Breast epithelium (tissue), 4 donors: ENCODE measurements at regions of chr3 and their contacts with region 1.

Region 1: GRCh38 chr3:89533275-89533674 is 425.9 kb downstream of the EPHA3 start:
- DNase-seq: no peak
- H3K4me3 ChIP-seq: no peak overlapping the region
- H3K27ac ChIP-seq: no peak overlapping the region
- H3K4me1 ChIP-seq: no peaks in the 10 kb centered on the region
- H3K27me3 ChIP-seq: no peaks in the 10 kb centered on the region
- CTCF ChIP-seq: no peak
- POLR2A ChIP-seq: no peak

Region 2: DNA sequence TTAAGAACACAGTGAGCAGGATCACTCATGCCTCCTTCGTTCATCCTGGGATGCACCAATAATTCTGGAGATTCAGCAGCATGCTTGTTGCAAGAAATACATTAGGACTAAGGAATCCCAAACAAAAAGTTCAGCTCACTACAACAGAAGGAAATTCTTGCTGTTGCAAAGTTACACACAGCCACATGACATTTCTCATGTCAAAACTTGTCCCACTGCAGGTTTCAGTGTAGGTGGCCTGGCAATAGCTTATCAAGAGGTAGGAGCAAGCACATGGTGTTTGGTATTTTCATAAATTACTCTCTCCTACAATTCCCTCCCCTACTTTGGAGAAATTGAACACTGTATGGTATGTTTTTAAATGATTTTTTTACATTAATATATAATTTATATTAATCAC is 825.4 kb before region 1 on chr3:
- intact Hi-C with region 1: loop called (anchors 10 kb)
- DNase-seq: no peak
- H3K4me3 ChIP-seq: no peak overlapping the region
- H3K27ac ChIP-seq: no peak overlapping the region
- H3K4me1 ChIP-seq: no peaks in the 10 kb centered on the region
- H3K27me3 ChIP-seq: no peaks in the 10 kb centered on the region
- CTCF ChIP-seq: no peak
- POLR2A ChIP-seq: no peak